ENCODE measurements at regions of chr15 and their contacts with region 1.

Region 1: GRCh38 chr15:90829942-90830440 is 38.4 kb upstream of the FURIN start:
- DNase-seq: peak; percentile 83 to 90 (median 87)
- H3K4me3 ChIP-seq: peak overlapping the region in 4 of 7 experiments; percentile 15 to 52 (median 48)
- H3K27ac ChIP-seq: peak overlapping the region; percentile 55 to 75
- H3K4me1 ChIP-seq: peaks cover 11 to 38% (median 24%) of the 10 kb centered on the region in 4 experiments
- H3K27me3 ChIP-seq: no peaks in the 10 kb centered on the region

Region 2: GRCh38 chr15:90818251-90819210 is 11.5 kb before region 1 on chr15:
- CTCF ChIA-PET with region 1: interaction called, 14 read pairs
- POLR2A ChIA-PET with region 1: interaction called, 15 read pairs
- DNase-seq: peak; percentile 70 to 89 (median 88)
- H3K4me3 ChIP-seq: peak overlapping the region in 4 of 7 experiments; percentile 8 to 49 (median 45)
- H3K27ac ChIP-seq: peak overlapping the region in 1 of 2 experiments; percentile 38
- H3K4me1 ChIP-seq: peaks cover 0 to 55% (median 46%) of the 10 kb centered on the region in 4 experiments
- H3K27me3 ChIP-seq: no peaks in the 10 kb centered on the region

Region 3: DNA sequence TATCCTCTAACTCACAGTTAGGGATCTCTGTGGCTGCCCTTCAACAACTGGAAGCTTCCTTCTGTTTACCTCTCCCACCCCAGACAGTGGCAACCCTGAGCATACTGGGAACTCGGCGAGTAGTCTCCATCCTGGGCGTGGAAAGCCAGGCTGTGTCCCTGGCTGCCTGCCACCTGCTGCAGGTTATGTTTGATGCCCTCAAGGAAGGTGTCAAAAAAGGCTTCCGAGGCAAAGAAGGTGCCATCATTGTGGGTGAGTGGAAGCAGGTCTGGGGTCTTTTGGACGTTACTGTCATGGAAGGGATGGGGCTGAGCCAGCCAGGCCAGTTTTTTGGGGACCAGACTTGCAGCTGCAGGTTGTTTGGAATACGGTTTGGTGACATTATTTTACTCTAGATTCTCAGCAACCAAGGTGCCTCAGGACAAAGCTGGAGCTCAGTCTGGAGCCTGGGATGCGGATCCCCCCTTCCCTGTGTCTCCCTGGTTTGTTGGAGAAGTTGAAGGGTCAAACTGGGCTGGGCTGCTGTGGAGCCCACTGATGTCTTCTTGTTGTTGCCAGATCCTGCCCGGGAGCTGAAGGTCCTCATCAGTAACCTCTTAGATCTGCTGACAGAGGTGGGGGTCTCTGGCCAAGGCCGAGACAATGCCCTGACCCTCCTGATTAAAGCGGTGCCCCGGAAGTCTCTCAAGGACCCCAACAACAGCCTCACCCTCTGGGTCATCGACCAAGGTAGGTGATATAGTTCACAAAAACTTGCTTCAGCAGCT is 112.5 kb after region 1 on chr15:
- CTCF ChIA-PET with region 1: no interaction called
- POLR2A ChIA-PET with region 1: no interaction called
- DNase-seq: no peak
- H3K4me3 ChIP-seq: no peak overlapping the region
- H3K27ac ChIP-seq: no peak overlapping the region
- H3K4me1 ChIP-seq: no peaks in the 10 kb centered on the region
- H3K27me3 ChIP-seq: no peaks in the 10 kb centered on the region

Measured in common myeloid progenitor, CD34-positive (primary cell).